CD4-positive, alpha-beta T cell (primary cell): ENCODE measurements at regions of chr4 and their contacts with region 1.

Region 1: GRCh38 chr4:183261953-183262775 is 57.9 kb downstream of the CLDN22 start:
- DNase-seq: peak; percentile 49 to 82 (median 65)
- ATAC-seq: peak; percentile 92
- H3K4me3 ChIP-seq: no peak overlapping the region
- H3K4me3 Mint-ChIP-seq: no peak overlapping the region
- H3K27ac ChIP-seq: no peak overlapping the region
- H3K27ac Mint-ChIP-seq: peak overlapping the region; percentile 60
- H3K4me1 ChIP-seq: peaks cover 6% of the 10 kb centered on the region
- H3K4me1 Mint-ChIP-seq: peaks cover 8% of the 10 kb centered on the region
- H3K27me3 ChIP-seq: no peaks in the 10 kb centered on the region
- H3K27me3 Mint-ChIP-seq: peaks cover 5% of the 10 kb centered on the region
- CTCF ChIP-seq: peak; percentile 87

Region 2: DNA sequence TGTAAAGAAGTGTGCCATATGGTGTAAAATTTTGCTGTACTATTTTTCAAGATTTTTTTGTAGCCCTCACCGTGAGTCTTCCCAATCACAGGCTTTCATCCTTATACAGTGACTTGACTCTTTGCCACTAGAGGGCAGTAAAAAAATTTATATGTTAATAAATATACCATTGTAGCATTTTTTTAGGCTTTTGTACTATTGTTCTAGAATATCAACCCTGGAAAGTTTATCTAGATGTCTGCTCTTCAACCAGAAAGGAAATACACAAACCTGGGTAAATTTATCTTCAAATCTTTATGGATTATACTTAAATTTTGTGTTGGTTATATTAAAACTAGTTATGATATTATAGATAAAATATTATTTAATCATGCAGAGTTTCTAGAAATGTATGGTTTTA is 783.7 kb before region 1 on chr4:
- CTCF ChIA-PET with region 1: interaction called, 3 read pairs
- POLR2A ChIA-PET with region 1: no interaction called
- intact Hi-C with region 1: loop called (anchors 5 kb)
- DNase-seq: peak in 3 of 14 experiments; percentile 20 to 42 (median 21)
- ATAC-seq: no peak
- H3K4me3 ChIP-seq: no peak overlapping the region
- H3K4me3 Mint-ChIP-seq: no peak overlapping the region
- H3K27ac ChIP-seq: no peak overlapping the region
- H3K27ac Mint-ChIP-seq: no peak overlapping the region
- H3K4me1 ChIP-seq: no peaks in the 10 kb centered on the region
- H3K4me1 Mint-ChIP-seq: no peaks in the 10 kb centered on the region
- H3K27me3 ChIP-seq: peaks cover 0 to 5% of the 10 kb centered on the region in 2 experiments
- H3K27me3 Mint-ChIP-seq: peaks cover 22% of the 10 kb centered on the region
- CTCF ChIP-seq: peak; percentile 81

Region 3: DNA sequence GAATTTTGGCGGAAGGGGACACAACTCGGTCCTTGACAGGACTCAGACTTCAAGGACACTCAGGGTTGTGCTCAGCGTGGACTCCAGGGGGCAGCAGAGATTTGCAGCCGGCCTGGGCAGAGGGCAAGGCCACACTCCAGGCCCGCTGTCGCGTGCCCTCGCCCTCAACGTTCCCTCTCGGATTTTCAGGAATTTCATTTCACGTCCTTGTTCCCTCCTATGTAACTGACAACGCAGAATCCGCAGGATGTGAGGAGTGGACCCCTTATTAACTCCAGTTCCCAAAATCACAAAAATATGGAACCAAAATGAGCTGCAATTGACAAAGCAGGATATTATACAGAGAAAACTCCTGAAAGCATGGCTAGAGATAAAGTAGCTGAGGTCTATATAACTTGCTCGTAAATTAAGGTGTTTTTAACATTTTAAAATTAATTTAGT is 323.9 kb before region 1 on chr4:
- CTCF ChIA-PET with region 1: interaction called, 5 read pairs
- POLR2A ChIA-PET with region 1: interaction called, 3 read pairs
- intact Hi-C with region 1: loop called (anchors 1 kb)
- DNase-seq: peak; percentile 22 to 77 (median 56)
- ATAC-seq: peak; percentile 82
- H3K4me3 ChIP-seq: no peak overlapping the region
- H3K4me3 Mint-ChIP-seq: no peak overlapping the region
- H3K27ac ChIP-seq: no peak overlapping the region
- H3K27ac Mint-ChIP-seq: no peak overlapping the region
- H3K4me1 ChIP-seq: peaks cover 4% of the 10 kb centered on the region
- H3K4me1 Mint-ChIP-seq: peaks cover 6% of the 10 kb centered on the region
- H3K27me3 ChIP-seq: no peaks in the 10 kb centered on the region
- H3K27me3 Mint-ChIP-seq: peaks cover 15% of the 10 kb centered on the region
- CTCF ChIP-seq: peak; percentile 87

Region 4: DNA sequence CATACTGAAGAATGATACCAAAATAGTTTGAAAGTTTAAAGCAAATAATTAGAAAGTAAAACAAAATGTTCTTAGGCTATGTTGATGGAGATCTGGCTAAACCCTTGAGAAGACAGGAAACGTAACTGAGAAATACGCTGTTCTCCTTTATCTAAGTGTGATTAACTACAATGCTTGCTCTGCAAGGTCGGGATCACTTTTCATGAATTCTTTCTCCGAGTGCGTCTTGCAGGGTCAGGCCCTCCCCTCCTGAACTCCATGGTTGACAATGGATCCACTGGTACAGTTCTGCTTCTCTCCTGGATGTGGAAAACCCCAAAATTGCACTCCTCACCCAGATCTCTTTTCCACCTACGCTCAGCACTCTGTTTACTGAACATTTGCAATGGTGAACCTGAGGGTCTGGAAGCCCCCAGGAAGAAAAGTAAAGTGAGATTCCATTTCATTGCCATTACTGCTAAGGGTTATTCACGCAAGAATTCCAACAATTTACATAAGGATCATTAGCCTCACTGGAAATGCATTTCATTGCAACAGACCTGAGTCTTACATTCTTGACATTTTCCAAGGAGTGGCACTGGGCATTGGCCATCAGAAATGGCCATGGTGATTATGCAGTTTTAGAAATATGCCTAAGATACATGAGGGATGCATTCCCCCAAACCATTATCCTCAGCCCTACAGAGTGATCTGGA is 187.7 kb before region 1 on chr4:
- CTCF ChIA-PET with region 1: interaction called, 24 read pairs
- POLR2A ChIA-PET with region 1: no interaction called
- intact Hi-C with region 1: loop called (anchors 1 kb)
- DNase-seq: no peak
- ATAC-seq: no peak
- H3K4me3 ChIP-seq: no peak overlapping the region
- H3K4me3 Mint-ChIP-seq: no peak overlapping the region
- H3K27ac ChIP-seq: no peak overlapping the region
- H3K27ac Mint-ChIP-seq: no peak overlapping the region
- H3K4me1 ChIP-seq: no peaks in the 10 kb centered on the region
- H3K4me1 Mint-ChIP-seq: no peaks in the 10 kb centered on the region
- H3K27me3 ChIP-seq: no peaks in the 10 kb centered on the region
- H3K27me3 Mint-ChIP-seq: peaks cover 5% of the 10 kb centered on the region
- CTCF ChIP-seq: no peak

Region 5: GRCh38 chr4:183098019-183098722 is 164.0 kb before region 1 on chr4:
- CTCF ChIA-PET with region 1: interaction called, 10 read pairs
- POLR2A ChIA-PET with region 1: interaction called, 3 read pairs
- intact Hi-C with region 1: no loop called
- DNase-seq: peak in 10 of 14 experiments; percentile 2 to 55 (median 8)
- ATAC-seq: peak; percentile 4
- H3K4me3 ChIP-seq: peak overlapping the region; percentile 75
- H3K4me3 Mint-ChIP-seq: peak overlapping the region; percentile 88
- H3K27ac ChIP-seq: no peak overlapping the region
- H3K27ac Mint-ChIP-seq: no peak overlapping the region
- H3K4me1 ChIP-seq: peaks cover 19% of the 10 kb centered on the region
- H3K4me1 Mint-ChIP-seq: peaks cover 31% of the 10 kb centered on the region
- H3K27me3 ChIP-seq: peaks cover 8 to 31% of the 10 kb centered on the region in 2 experiments
- H3K27me3 Mint-ChIP-seq: peaks cover 29% of the 10 kb centered on the region
- CTCF ChIP-seq: no peak